ENCODE measurements at regions of chr7 and their contacts with region 1.

Region 1: GRCh38 chr7:85023045-85023712 is 163.7 kb downstream of the SEMA3D start:
- DNase-seq: peak; percentile 71
- H3K4me3 Mint-ChIP-seq: no peak overlapping the region
- H3K27ac Mint-ChIP-seq: no peak overlapping the region
- H3K4me1 Mint-ChIP-seq: peaks cover 21% of the 10 kb centered on the region
- H3K27me3 Mint-ChIP-seq: no peaks in the 10 kb centered on the region
- CTCF ChIP-seq: peak; percentile 54

Region 2: GRCh38 chr7:83957333-83957732 is 1065.8 kb before region 1 on chr7:
- CTCF ChIA-PET with region 1: interaction called, 13 read pairs
- POLR2A ChIA-PET with region 1: interaction called, 3 read pairs
- intact Hi-C with region 1: no loop called
- DNase-seq: peak; percentile 30
- H3K4me3 Mint-ChIP-seq: no peak overlapping the region
- H3K27ac Mint-ChIP-seq: peak overlapping the region; percentile 22
- H3K4me1 Mint-ChIP-seq: peaks cover 5% of the 10 kb centered on the region
- H3K27me3 Mint-ChIP-seq: no peaks in the 10 kb centered on the region
- CTCF ChIP-seq: no peak

Region 3: DNA sequence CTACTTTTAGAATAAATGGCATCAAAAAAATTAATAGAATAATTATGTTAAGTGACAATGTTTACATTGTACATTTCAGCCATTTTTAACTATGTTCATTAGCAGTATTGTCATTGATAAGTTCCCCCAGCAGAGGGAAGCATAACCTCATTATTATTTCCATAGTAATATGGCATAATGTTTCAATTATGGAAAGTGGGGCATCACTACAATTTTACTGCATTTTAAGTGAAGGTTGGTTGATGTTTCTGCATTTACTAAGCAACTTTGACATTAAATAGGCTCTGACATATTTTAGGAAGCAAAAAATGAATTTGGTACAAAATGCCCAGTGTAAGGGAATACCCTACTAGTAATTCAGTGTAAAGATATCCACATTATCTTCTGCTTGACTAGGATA is 1046.9 kb before region 1 on chr7:
- CTCF ChIA-PET with region 1: interaction called, 33 read pairs
- POLR2A ChIA-PET with region 1: no interaction called
- intact Hi-C with region 1: loop called (anchors 1 kb)
- DNase-seq: peak; percentile 54
- H3K4me3 Mint-ChIP-seq: no peak overlapping the region
- H3K27ac Mint-ChIP-seq: no peak overlapping the region
- H3K4me1 Mint-ChIP-seq: no peaks in the 10 kb centered on the region
- H3K27me3 Mint-ChIP-seq: no peaks in the 10 kb centered on the region
- CTCF ChIP-seq: peak; percentile 55

Region 4: DNA sequence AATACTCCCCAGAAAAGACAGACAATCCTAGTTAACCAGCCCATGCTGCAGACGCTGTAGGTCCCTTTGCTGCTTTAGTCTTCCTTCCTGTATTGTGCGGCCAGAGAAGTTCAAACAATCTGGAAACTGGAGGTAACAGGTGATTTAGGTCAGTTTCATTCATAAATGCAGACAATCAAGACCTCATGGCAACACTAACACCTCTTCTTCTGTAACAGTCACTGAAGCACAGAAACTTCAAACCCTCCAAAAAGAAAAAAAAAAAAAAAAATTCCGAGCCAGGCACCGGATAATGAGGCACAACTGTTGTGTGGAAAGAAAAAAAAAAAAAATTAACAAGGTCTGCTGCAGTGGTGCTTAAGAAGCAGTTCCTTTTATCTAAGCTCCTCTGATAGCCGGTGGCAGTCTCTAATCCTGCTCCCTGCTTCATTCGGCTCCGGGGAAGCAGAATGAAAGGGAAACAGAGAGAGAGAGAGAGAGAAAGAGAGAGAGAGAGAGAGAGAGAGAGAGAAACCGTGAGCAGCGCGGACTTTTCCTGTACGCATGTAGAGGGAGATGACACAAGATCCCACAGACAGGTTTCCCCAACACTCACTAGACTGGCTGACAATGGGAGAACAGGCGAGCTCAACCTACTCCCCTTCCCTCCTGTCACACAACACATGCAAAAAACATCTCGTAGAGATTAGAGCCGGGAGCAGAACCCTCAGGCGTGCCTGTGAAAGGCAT is 828.5 kb before region 1 on chr7 and contains the start of gene SEMA3A:
- CTCF ChIA-PET with region 1: interaction called, 10 read pairs
- POLR2A ChIA-PET with region 1: interaction called, 4 read pairs
- intact Hi-C with region 1: loop called (anchors 2 kb)
- DNase-seq: peak; percentile 70
- H3K4me3 Mint-ChIP-seq: peak within 1 kb of the TSS; percentile 81
- H3K27ac Mint-ChIP-seq: peak within 1 kb of the TSS; percentile 33
- H3K4me1 Mint-ChIP-seq: peaks cover 6% of the 10 kb centered on the region
- H3K27me3 Mint-ChIP-seq: no peaks in the 10 kb centered on the region
- CTCF ChIP-seq: no peak
- total RNA-seq, gene SEMA3A: 1.5 and 3.2 TPM in 2 replicates

Region 5: GRCh38 chr7:84248267-84248666 is 774.9 kb before region 1 on chr7:
- CTCF ChIA-PET with region 1: interaction called, 7 read pairs
- POLR2A ChIA-PET with region 1: no interaction called
- intact Hi-C with region 1: loop called (anchors 1 kb)
- DNase-seq: no peak
- H3K4me3 Mint-ChIP-seq: no peak overlapping the region
- H3K27ac Mint-ChIP-seq: no peak overlapping the region
- H3K4me1 Mint-ChIP-seq: no peaks in the 10 kb centered on the region
- H3K27me3 Mint-ChIP-seq: no peaks in the 10 kb centered on the region
- CTCF ChIP-seq: no peak

Region 6: GRCh38 chr7:84455788-84456187 is 567.4 kb before region 1 on chr7:
- CTCF ChIA-PET with region 1: no interaction called
- POLR2A ChIA-PET with region 1: no interaction called
- intact Hi-C with region 1: loop called (anchors 2 kb)
- DNase-seq: peak; percentile 20
- H3K4me3 Mint-ChIP-seq: no peak overlapping the region
- H3K27ac Mint-ChIP-seq: no peak overlapping the region
- H3K4me1 Mint-ChIP-seq: no peaks in the 10 kb centered on the region
- H3K27me3 Mint-ChIP-seq: no peaks in the 10 kb centered on the region
- CTCF ChIP-seq: no peak

Region 7: GRCh38 chr7:84614821-84615505 is 408.2 kb before region 1 on chr7:
- CTCF ChIA-PET with region 1: interaction called, 3 read pairs
- POLR2A ChIA-PET with region 1: no interaction called
- intact Hi-C with region 1: loop called (anchors 2 kb)
- DNase-seq: peak; percentile 22
- H3K4me3 Mint-ChIP-seq: no peak overlapping the region
- H3K27ac Mint-ChIP-seq: no peak overlapping the region
- H3K4me1 Mint-ChIP-seq: no peaks in the 10 kb centered on the region
- H3K27me3 Mint-ChIP-seq: no peaks in the 10 kb centered on the region
- CTCF ChIP-seq: peak; percentile 20

Region 8: DNA sequence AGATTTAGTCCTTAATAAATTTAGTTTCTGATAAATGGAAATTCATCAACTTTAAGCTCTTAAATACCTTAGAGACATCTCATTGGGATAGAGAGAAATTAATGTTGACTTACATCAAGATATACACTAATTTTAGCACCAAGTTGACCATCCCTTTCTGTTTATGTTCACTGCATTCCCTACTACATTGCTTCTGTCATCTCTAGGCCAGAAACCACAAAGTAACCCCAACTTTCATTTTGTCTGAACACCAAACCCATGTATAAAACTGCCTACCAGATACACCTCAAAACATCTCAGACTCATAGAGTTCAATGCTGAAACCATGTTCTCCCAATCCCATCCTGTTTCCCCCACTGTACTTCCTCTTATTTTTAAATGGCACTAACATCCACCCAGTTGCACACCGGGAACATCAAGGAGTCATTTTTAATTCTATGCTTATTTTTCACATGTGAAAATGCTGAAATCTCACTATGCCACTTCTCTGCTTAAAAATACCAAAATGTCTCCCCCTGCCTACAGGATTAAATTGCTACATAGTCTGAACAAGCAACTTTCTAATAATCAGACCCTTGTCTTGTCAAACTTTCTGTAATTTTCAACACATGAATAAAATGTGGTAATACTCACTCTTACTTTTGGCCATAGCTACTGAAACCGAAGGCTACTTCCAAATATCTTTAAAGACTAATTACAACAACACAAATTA is 38.0 kb before region 1 on chr7:
- CTCF ChIA-PET with region 1: no interaction called
- POLR2A ChIA-PET with region 1: no interaction called
- intact Hi-C with region 1: no loop called
- DNase-seq: no peak
- H3K4me3 Mint-ChIP-seq: no peak overlapping the region
- H3K27ac Mint-ChIP-seq: no peak overlapping the region
- H3K4me1 Mint-ChIP-seq: peaks cover 6% of the 10 kb centered on the region
- H3K27me3 Mint-ChIP-seq: no peaks in the 10 kb centered on the region
- CTCF ChIP-seq: no peak